ENCODE measurements at regions of chr4 and their contacts with region 1.

Region 1: GRCh38 chr4:146481246-146481645 is 40.5 kb downstream of the SLC10A7 start:
- DNase-seq: no peak
- H3K4me3 Mint-ChIP-seq: no peak overlapping the region
- H3K27ac Mint-ChIP-seq: no peak overlapping the region
- H3K4me1 Mint-ChIP-seq: peaks cover 11% of the 10 kb centered on the region
- H3K27me3 Mint-ChIP-seq: no peaks in the 10 kb centered on the region

Region 2: GRCh38 chr4:146498291-146498690 is 17.0 kb after region 1 on chr4:
- CTCF ChIA-PET with region 1: no interaction called
- POLR2A ChIA-PET with region 1: no interaction called
- DNase-seq: no peak
- H3K4me3 Mint-ChIP-seq: no peak overlapping the region
- H3K27ac Mint-ChIP-seq: no peak overlapping the region
- H3K4me1 Mint-ChIP-seq: peaks cover 6% of the 10 kb centered on the region
- H3K27me3 Mint-ChIP-seq: no peaks in the 10 kb centered on the region

Region 3: GRCh38 chr4:146522098-146522868 is 41.0 kb after region 1 on chr4:
- CTCF ChIA-PET with region 1: interaction called, 11 read pairs
- POLR2A ChIA-PET with region 1: no interaction called
- DNase-seq: peak; percentile 87
- H3K4me3 Mint-ChIP-seq: no peak overlapping the region
- H3K27ac Mint-ChIP-seq: no peak overlapping the region
- H3K4me1 Mint-ChIP-seq: peaks cover 22% of the 10 kb centered on the region
- H3K27me3 Mint-ChIP-seq: no peaks in the 10 kb centered on the region

Measured in activated CD4-positive, alpha-beta T cell treated with anti-CD3 and anti-CD28 coated beads, Interleukin-2, amount 10 ng/mL, durations not matched to agents 7 days and 5 days (primary cell).